GM23248 (cell line): ENCODE measurements at regions of chr20 and their contacts with region 1.

Region 1: DNA sequence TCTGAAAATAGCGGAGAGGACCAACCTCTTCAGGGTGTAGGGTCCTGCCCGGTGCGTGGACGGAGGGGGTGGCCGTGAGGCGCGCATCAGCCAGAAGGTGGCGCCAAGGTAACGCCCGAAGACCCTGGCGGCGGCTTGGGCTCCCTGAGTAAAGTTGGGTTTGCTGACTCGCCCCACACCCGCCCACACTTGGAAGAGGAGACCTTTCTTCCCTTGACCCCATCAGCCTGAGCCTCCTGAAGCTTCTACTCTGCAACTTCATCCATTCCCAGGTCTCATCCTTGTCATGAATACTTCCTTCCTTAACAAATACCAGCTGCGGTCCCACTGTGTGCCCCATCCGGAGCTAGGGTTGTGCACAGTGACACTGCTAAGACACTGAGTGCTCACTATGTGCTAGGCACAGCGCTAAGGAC is 14.6 kb downstream of the CD40 start:
- DNase-seq: peak; percentile 79
- H3K4me3 ChIP-seq: no peak overlapping the region
- H3K27ac ChIP-seq: no peak overlapping the region
- H3K4me1 ChIP-seq: no peaks in the 10 kb centered on the region
- H3K27me3 ChIP-seq: peaks cover 29% of the 10 kb centered on the region

Region 2: GRCh38 chr20:46349035-46349741 is 216.5 kb after region 1 on chr20:
- in situ Hi-C with region 1: loop called (anchors 10 kb)
- DNase-seq: peak; percentile 72
- H3K4me3 ChIP-seq: no peak overlapping the region
- H3K27ac ChIP-seq: no peak overlapping the region
- H3K4me1 ChIP-seq: peaks cover 16% of the 10 kb centered on the region
- H3K27me3 ChIP-seq: peaks cover 7% of the 10 kb centered on the region

Region 3: GRCh38 chr20:46438156-46438750 is 305.5 kb after region 1 on chr20:
- in situ Hi-C with region 1: loop called (anchors 25 kb)
- DNase-seq: peak; percentile 62
- H3K4me3 ChIP-seq: no peak overlapping the region
- H3K27ac ChIP-seq: no peak overlapping the region
- H3K4me1 ChIP-seq: no peaks in the 10 kb centered on the region
- H3K27me3 ChIP-seq: 0 out of 2 replicates have a peak, but pooled peaks cover 6% of the 10 kb centered on the region